Mammary epithelial cell (primary cell): ENCODE measurements at regions of chr7 and their contacts with region 1.

Region 1: DNA sequence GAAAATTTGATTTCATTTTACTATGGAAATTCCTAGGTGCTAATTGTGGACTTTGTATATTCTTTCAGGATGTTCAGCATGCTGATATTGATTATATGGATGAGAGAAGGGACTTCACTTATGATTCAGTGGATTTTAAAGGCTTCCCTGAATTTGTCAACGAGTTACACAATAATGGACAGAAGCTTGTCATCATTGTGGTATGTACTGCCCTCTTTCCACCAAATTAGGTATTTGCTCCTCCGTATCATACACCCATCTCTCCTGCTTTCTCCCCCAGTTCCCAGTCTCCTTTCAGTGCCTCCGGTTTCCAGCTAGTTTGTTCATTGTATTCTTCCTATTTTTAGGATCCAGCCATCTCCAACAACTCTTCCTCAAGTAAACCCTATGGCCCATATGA is 34.6 kb downstream of the MGAM start:
- DNase-seq: peak; percentile 70
- H3K4me3 ChIP-seq: no peak overlapping the region
- H3K27ac ChIP-seq: peak overlapping the region; percentile 17
- H3K4me1 ChIP-seq: peaks cover 37% of the 10 kb centered on the region
- H3K27me3 ChIP-seq: no peaks in the 10 kb centered on the region
- CTCF ChIP-seq: peak; percentile 25 to 46

Region 2: GRCh38 chr7:141320287-141320686 is 710.0 kb before region 1 on chr7:
- CTCF ChIA-PET with region 1: no interaction called
- dilution Hi-C with region 1: no loop called
- in situ Hi-C with region 1: no loop called
- intact Hi-C with region 1: no loop called
- DNase-seq: no peak
- H3K4me3 ChIP-seq: no peak overlapping the region
- H3K27ac ChIP-seq: no peak overlapping the region
- H3K4me1 ChIP-seq: no peaks in the 10 kb centered on the region
- H3K27me3 ChIP-seq: no peaks in the 10 kb centered on the region
- CTCF ChIP-seq: no peak

Region 3: DNA sequence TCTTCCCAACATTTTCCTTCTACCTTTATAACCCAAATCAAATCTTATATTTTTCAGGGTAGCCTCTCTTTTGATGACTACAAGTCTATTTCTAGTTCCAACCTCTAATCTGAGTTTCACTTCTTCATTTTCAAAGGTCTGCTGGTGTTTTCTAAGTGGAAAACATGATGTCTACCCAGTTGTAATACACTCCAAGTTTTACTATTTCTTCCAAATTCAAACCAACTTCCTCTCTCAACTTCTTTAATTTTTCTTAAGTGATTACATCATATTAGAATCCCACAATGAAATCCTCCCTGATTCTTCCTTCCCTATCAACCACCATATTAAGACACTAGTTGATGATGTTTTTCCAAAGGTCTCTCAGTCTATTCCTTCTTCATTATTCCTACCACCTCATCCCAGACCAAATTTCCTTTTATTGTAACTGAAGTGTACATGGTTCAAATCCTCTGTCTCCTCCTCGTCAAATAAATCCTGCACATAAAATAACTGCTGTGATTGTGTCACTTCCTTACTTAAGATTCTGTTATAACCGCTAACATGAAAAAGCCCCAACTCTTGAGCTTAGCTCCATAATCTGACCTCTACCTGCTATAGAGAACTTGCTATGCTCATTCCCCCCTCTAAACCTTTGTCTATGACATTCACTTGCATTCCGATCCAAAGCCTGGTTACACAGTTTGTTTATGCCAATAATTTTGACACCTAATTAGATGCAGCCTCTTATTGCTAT is 69.4 kb before region 1 on chr7:
- CTCF ChIA-PET with region 1: no interaction called
- dilution Hi-C with region 1: loop called (anchors 5 kb)
- in situ Hi-C with region 1: no loop called
- intact Hi-C with region 1: no loop called
- DNase-seq: no peak
- H3K4me3 ChIP-seq: no peak overlapping the region
- H3K27ac ChIP-seq: no peak overlapping the region
- H3K4me1 ChIP-seq: peaks cover 3% of the 10 kb centered on the region
- H3K27me3 ChIP-seq: no peaks in the 10 kb centered on the region
- CTCF ChIP-seq: no peak

Region 4: GRCh38 chr7:142196066-142196840 is 166.0 kb after region 1 on chr7:
- CTCF ChIA-PET with region 1: no interaction called
- dilution Hi-C with region 1: loop called (anchors 10 kb)
- in situ Hi-C with region 1: no loop called
- intact Hi-C with region 1: no loop called
- DNase-seq: peak; percentile 66
- H3K4me3 ChIP-seq: no peak overlapping the region
- H3K27ac ChIP-seq: no peak overlapping the region
- H3K4me1 ChIP-seq: no peaks in the 10 kb centered on the region
- H3K27me3 ChIP-seq: no peaks in the 10 kb centered on the region
- CTCF ChIP-seq: no peak